ENCODE measurements at regions of chr10 and their contacts with region 1.

Region 1: GRCh38 chr10:13371897-13372470 is 23.9 kb upstream of the SEPHS1 start:
- DNase-seq: peak; percentile 73
- H3K4me3 ChIP-seq: no peak overlapping the region
- H3K27ac ChIP-seq: no peak overlapping the region
- H3K4me1 ChIP-seq: no peaks in the 10 kb centered on the region
- H3K27me3 ChIP-seq: no peaks in the 10 kb centered on the region
- CTCF ChIP-seq: peak; percentile 99

Region 2: GRCh38 chr10:12201543-12201942 is 1170.4 kb before region 1 on chr10:
- CTCF ChIA-PET with region 1: no interaction called
- dilution Hi-C with region 1: no loop called
- in situ Hi-C with region 1: no loop called
- intact Hi-C with region 1: no loop called
- DNase-seq: no peak
- H3K4me3 ChIP-seq: no peak overlapping the region
- H3K27ac ChIP-seq: no peak overlapping the region
- H3K4me1 ChIP-seq: peaks cover 14% of the 10 kb centered on the region
- H3K27me3 ChIP-seq: no peaks in the 10 kb centered on the region
- CTCF ChIP-seq: no peak

Region 3: DNA sequence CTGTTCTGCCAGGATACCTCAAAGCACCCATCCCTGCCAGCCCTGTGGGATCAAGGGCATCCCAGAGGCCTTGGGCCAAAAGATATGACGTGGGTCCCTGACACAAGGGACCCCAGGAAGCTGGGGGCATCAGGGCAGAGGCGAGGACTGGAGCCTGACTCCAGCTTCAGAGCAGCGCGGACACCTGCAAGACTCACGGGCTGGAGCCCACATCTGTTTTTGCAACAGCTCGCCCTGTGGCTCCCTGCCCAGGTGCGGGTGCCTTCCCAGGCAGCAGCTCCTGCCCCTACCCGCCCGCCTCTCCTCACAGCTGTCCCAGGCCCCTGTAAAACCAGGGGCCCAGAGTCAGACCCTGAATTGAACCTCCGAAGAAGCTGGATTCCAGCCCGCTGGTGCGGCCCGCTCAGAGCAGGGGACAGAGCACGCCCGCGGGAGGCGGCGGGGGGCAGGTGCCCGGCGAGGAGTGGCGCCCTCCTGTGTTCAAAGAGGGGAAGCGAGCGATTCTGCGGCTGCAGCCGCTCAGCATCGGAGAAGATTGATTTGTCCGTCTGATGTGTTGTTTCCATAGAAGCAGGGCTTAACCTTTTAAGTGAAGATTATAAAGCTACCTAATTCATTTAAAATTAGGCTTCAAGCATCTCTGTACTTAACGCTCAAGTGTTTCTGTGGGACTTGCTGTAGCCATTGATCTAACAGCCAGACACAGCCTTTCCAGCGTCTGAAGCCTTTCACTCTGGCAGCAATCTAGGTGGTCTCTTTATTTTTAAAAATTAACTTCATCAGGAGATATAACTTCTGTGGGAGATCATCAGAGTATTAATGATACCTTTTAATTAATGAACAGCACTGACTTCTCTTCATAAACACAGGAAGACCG is 68.4 kb after region 1 on chr10:
- CTCF ChIA-PET with region 1: interaction called, 8 read pairs
- dilution Hi-C with region 1: no loop called
- in situ Hi-C with region 1: no loop called
- intact Hi-C with region 1: loop called (anchors 1 kb)
- DNase-seq: peak; percentile 43
- H3K4me3 ChIP-seq: peak overlapping the region; percentile 15 to 40 (median 35)
- H3K27ac ChIP-seq: no peak overlapping the region
- H3K4me1 ChIP-seq: peaks cover 13% of the 10 kb centered on the region
- H3K27me3 ChIP-seq: peaks cover 3% of the 10 kb centered on the region
- CTCF ChIP-seq: peak; percentile 69 to 95

Region 4: GRCh38 chr10:13536674-13537366 is 164.8 kb after region 1 on chr10:
- CTCF ChIA-PET with region 1: interaction called, 9 read pairs
- dilution Hi-C with region 1: no loop called
- in situ Hi-C with region 1: loop called (anchors 10 to 25 kb)
- intact Hi-C with region 1: loop called (anchors 1 kb)
- DNase-seq: peak; percentile 14
- H3K4me3 ChIP-seq: no peak overlapping the region
- H3K27ac ChIP-seq: no peak overlapping the region
- H3K4me1 ChIP-seq: no peaks in the 10 kb centered on the region
- H3K27me3 ChIP-seq: no peaks in the 10 kb centered on the region
- CTCF ChIP-seq: peak; percentile 44 to 70

Region 5: GRCh38 chr10:13586676-13587355 is 214.8 kb after region 1 on chr10 and contains the start of gene PRPF18:
- CTCF ChIA-PET with region 1: interaction called, 13 read pairs
- dilution Hi-C with region 1: no loop called
- in situ Hi-C with region 1: no loop called
- intact Hi-C with region 1: loop called (anchors 1 kb)
- DNase-seq: peak; percentile 89
- H3K4me3 ChIP-seq: peak within 1 kb of the TSS; percentile 94 to 96 (median 94)
- H3K27ac ChIP-seq: peak within 1 kb of the TSS; percentile 73
- H3K4me1 ChIP-seq: peaks cover 4% of the 10 kb centered on the region
- H3K27me3 ChIP-seq: no peaks in the 10 kb centered on the region
- CTCF ChIP-seq: peak; percentile 92 to 97
- total RNA-seq, gene PRPF18: 22.4 to 23.0 TPM